ENCODE measurements at regions of chr19 and their contacts with region 1.

Region 1: DNA sequence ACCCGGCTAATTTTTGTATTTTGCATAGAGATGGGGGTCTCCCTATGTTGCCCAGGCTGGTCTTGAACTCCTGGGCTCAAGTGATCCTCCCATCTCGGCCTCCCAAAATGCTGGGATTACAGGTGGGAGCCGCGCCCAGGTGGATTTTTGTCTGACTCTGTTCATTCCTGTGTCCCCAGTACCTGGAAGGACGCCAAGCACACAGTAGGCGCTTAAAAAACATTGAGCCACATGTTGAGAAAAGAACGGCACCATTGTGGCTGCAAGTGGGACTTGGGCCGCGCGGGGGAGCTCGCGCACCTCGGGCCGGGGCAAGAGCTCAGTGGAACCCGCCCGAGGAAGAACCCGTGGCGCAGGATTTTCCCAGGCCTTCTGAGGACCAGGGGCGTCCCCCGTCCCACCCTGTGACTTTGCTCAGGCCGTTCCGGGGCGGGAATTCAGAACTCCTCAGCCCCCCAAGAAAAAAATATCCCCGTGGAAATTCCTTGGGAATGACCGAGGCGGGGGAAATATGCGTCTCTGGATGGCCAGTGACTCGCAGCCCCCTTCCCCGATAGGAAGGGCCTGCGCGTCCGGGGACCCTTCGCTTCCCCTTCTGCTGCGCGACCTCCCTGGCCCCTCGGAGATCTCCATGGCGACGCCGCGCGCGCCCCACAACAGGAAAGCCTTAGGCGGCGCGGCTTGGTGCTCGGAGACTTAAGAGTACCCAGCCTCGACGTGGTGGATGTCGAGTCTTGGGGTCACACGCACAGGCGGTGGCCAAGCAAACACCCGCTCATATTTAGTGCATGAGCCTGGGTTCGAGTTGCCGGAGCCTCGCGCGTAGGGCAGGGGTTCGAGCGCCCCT is 1.4 kb upstream of the ICAM1 start:
- DNase-seq: peak; percentile 82
- CTCF ChIP-seq: peak; percentile 98

Region 2: DNA sequence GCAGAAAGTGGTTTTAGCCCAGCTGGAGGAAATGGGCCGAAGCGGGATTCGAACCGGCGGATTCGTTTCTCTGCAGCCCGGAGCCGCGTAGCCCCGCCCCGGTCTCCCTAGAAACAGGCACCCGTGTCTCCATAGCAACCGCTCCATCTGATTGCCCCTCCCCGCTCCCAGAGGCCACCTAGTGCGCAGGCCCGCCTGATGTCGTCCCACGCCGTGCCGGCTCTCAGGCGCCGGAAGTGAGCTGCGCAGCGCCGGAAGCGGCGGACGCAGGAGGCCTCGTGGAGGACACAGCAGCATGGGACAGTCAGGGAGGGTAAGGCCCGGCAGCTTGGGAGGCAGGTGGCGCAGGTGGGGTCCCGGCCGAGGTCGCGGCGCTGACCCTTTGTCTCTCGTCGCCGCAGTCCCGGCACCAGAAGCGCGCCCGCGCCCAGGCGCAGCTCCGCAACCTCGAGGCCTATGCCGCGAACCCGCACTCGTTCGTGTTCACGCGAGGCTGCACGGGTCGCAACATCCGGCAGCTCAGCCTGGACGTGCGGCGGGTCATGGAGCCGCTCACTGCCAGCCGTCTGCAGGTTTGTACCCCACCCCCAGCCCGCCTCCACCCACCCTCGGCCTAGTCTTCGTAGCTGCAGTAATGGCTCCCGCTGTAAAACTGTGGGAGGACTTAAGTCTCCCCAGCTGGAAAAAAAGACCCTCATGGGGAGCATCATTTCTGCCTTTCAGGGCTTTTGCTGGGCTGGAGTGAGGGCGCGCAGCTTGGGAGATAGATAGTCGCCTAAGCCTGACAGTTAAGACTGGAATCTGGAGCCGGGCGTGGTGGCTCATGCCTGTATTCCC is 163.2 kb before region 1 on chr19 and contains the start of gene PPAN:
- CTCF ChIA-PET with region 1: no interaction called
- POLR2A ChIA-PET with region 1: interaction called, 12 read pairs
- DNase-seq: peak; percentile 98
- CTCF ChIP-seq: no peak

Region 3: GRCh38 chr19:10286803-10287737 is 17.5 kb after region 1 on chr19 and contains the start of gene ICAM4:
- CTCF ChIA-PET with region 1: interaction called, 54 read pairs
- POLR2A ChIA-PET with region 1: interaction called, 84 read pairs
- DNase-seq: peak; percentile 59
- CTCF ChIP-seq: no peak

Region 4: GRCh38 chr19:10380313-10381102 is 111.0 kb after region 1 on chr19 and contains the start of gene TYK2:
- CTCF ChIA-PET with region 1: interaction called, 484 read pairs
- POLR2A ChIA-PET with region 1: interaction called, 20 read pairs
- DNase-seq: peak; percentile 100
- CTCF ChIP-seq: no peak

Region 5: DNA sequence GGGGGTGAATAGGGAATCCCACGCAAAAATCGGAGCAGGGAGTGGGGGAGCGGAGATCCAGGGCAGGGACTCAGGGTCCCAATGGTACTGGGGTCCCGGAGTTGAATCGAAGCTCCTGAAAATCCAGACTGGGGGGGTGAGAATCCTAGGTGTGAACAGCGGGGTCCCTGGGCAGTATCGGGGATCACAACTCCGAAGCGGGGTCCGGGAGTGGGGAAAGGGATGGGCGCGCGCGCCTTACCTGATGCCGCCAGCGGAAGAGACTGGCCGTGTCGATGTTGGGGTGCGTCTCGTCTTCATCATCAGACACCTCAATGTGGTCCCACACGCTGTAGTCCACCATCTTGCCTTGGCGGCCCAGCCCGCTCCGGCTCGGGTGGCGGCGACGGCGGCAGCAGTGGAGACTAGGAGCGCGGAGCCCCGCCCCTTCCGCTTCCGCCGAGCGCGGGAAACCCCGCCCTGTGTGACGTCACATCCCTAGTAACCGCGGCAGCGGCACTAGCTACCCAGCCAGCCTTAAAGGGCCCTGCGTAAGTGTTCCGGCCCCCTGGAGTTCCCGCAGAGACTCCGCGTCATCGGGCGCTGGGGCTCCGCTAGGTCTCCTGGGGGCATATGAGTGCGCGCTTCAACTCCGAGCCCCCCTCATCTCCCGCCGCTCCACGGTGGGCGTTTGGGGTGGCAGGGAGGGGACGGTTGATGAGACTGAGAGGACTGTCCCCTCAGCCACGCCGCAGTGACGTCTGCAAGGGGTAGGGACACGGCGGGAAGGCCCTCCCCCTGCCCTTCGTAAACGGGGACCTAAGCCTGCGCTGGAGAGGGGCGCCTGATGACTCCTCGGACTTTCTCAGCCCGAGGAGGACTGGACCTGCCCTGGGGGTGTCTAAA is 133.8 kb after region 1 on chr19 and contains the start of gene CDC37:
- CTCF ChIA-PET with region 1: interaction called, 21 read pairs
- POLR2A ChIA-PET with region 1: interaction called, 15 read pairs
- DNase-seq: peak; percentile 99
- CTCF ChIP-seq: no peak

Measured in GM10248 (cell line).